ENCODE measurements at regions of chr1 and their contacts with region 1.

Region 1: DNA sequence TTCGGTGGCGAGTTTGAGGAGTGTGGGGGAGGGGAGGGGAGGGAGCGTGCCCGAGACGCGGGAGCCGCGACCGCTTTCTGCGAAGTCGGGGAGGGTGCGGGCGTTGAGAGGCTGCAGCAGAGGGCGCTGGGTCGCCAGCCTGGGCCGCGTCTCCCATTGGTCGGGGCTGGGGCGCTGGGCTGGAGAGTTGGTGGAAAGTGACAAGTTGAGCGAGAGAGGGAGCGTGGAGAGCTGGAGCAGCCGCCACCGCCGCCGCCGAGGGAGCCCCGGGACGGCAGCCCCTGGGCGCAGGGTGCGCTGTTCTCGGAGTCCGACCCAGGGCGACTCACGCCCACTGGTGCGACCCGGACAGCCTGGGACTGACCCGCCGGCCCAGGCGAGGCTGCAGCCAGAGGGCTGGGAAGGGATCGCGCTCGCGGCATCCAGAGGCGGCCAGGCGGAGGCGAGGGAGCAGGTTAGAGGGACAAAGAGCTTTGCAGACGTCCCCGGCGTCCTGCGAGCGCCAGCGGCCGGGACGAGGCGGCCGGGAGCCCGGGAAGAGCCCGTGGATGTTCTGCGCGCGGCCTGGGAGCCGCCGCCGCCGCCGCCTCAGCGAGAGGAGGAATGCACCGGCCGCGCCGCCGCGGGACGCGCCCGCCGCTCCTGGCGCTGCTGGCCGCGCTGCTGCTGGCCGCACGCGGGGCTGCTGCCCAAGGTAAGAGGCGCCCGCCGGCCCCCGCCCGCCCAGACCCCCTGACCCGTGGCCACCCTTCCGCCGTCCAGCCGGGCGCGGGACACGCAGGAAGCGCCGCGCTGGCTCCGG is at the start of gene ROR1:
- DNase-seq: peak; percentile 88
- ATAC-seq: peak; percentile 97
- total RNA-seq, gene ROR1: 5.7 to 14.7 TPM

Region 2: DNA sequence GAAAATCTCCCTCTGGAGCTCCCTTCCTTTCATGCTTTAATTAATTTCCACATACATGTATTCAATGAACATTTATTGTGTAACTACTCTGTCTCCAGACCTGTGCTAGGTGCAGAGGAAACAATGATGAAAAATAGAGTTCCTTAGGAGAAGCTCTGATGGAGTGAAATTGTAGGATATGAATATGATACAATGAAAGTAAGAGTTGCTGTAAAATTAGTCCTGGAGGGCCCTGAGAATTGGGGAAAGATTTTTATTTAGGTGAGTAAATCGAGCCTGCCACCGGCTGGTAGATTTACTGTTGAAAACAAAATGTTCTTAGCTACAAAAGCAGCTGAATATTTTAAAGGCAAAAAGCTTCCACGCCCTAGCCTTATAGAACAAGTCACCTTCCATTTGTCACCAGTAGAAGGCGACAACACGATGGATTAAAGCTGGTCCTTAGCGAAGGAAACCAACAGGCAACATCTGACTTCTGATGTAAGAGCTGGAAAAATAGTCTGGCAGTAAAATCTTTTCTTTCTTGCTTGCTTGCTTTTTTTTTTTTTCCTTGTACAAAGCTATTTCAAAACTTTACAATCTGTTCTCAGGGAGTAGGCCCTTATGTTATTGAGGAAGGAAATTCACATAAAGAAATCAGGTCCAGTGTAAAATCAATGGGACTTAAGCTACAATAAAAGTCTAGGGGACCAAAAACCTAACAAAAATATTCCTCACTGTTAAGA is 82.2 kb before region 1 on chr1:
- intact Hi-C with region 1: loop called in 1 of 2 experiments (anchors 5 kb)
- DNase-seq: peak; percentile 37
- ATAC-seq: peak; percentile 83 to 90

Measured in left cardiac atrium (tissue), 4 donors.